BJ (cell line): ENCODE measurements at regions of chr6 and their contacts with region 1.

Region 1: GRCh38 chr6:74289884-74290283 is 593.9 kb downstream of the CD109 start:
- DNase-seq: peak; percentile 79
- H3K4me3 ChIP-seq: no peak overlapping the region
- H3K27me3 ChIP-seq: no peaks in the 10 kb centered on the region
- CTCF ChIP-seq: no peak

Region 2: DNA sequence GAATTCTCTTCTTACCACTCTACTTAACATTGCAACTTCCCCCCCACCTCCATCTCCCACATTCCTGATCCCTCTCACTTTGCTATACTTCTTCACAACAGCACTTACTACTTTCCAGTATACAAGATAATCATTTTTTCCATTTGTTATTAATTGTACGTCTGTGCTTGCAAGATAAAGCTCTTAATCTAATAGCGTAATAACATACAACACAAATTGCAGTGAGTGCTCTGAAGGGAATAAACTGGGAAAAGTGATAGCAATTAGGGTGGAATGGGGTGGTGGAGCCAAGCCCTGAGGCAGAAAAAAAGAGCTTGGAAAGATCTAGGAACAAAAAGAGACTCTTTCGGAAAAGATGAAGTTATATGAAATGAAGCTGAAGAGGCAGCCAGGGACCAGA is 846.3 kb before region 1 on chr6:
- CTCF ChIA-PET with region 1: no interaction called
- POLR2A ChIA-PET with region 1: interaction called, 14 read pairs
- DNase-seq: no peak
- H3K4me3 ChIP-seq: no peak overlapping the region
- H3K27me3 ChIP-seq: no peaks in the 10 kb centered on the region
- CTCF ChIP-seq: no peak

Region 3: DNA sequence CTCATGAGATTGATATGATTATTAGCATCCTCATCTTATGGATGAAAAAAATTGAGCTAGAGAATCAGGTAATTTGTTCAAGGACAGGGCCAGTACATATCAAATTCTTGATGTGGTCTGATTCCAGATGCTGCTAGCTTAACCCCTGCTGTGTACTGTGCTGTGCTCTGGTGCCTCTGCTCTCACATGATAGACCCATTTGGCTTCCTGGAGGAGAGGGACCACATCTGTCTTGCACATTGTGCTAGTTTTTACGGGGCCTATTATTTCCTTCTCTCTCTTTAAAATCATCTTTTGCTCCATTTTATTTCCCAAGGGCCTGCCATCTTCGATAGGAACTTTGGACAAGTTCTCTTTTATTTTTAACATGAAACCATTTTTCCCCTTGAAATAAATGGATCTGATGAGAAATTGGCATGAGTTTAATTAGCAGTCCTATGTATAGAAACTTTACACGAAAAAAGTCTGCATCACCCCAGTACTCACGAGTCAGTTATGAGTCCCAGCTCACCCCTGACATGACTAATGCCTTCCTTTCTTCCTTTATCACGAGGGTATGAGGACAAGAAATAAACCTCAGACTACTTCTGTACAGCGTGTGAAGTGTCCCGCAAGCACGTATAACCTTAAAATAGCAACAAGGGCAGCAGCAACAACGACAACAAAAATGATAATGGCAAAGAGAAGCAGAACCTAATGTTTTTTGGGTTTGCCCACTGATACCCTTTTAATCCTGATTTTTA is 567.4 kb before region 1 on chr6:
- CTCF ChIA-PET with region 1: no interaction called
- POLR2A ChIA-PET with region 1: no interaction called
- DNase-seq: peak; percentile 91
- H3K4me3 ChIP-seq: no peak overlapping the region
- H3K27me3 ChIP-seq: no peaks in the 10 kb centered on the region
- CTCF ChIP-seq: no peak

Region 4: GRCh38 chr6:74657011-74657410 is 367.1 kb after region 1 on chr6:
- CTCF ChIA-PET with region 1: no interaction called
- POLR2A ChIA-PET with region 1: no interaction called
- DNase-seq: peak; percentile 78
- H3K4me3 ChIP-seq: no peak overlapping the region
- H3K27me3 ChIP-seq: no peaks in the 10 kb centered on the region
- CTCF ChIP-seq: no peak